ENCODE measurements at regions of chr12 and their contacts with region 1.

Region 1: GRCh38 chr12:92145731-92146496 is at the start of gene BTG1:
- DNase-seq: peak; percentile 99
- total RNA-seq, gene BTG1: 72.8 TPM

Region 2: GRCh38 chr12:91382081-91382543 is 763.8 kb before region 1 on chr12:
- intact Hi-C with region 1: loop called (anchors 2 kb)
- DNase-seq: peak; percentile 86

Region 3: DNA sequence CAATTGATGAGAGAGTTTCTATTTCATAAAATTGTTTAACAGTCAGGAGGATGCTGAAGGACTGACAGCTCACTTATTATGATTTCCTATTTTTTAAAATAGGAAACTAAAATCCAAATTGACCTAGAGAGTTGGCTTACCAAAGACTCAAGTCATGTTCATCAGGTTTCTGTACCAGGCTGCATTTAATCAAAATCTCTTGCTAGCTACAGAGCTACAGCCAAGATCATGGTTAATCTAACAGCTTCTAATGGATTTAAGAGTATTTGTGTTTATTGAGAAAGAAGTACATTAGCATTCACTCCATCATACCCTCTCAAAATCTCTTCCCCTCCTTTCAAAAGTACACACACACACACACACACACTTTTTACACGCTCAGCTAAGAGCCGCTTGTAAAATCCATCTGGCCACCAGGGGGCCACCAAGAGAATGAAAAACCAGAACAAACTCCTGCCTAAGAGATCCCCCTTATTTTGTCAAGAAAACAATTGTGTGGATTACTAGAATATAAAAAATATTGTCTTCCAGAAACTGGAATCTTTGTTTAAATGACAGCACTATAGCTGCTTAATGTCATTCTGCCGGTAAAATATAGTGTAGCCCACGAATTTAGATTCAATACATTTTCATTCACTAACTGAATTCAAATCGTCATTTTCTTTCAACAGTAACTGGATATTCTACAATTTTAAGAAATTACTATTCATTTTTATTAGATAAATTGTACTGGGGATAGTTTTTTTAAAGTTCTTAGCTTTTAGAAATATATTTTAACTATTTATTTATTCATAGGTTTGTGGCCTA is 334.2 kb before region 1 on chr12:
- intact Hi-C with region 1: loop called (anchors 2 kb)
- DNase-seq: peak; percentile 86

Region 4: DNA sequence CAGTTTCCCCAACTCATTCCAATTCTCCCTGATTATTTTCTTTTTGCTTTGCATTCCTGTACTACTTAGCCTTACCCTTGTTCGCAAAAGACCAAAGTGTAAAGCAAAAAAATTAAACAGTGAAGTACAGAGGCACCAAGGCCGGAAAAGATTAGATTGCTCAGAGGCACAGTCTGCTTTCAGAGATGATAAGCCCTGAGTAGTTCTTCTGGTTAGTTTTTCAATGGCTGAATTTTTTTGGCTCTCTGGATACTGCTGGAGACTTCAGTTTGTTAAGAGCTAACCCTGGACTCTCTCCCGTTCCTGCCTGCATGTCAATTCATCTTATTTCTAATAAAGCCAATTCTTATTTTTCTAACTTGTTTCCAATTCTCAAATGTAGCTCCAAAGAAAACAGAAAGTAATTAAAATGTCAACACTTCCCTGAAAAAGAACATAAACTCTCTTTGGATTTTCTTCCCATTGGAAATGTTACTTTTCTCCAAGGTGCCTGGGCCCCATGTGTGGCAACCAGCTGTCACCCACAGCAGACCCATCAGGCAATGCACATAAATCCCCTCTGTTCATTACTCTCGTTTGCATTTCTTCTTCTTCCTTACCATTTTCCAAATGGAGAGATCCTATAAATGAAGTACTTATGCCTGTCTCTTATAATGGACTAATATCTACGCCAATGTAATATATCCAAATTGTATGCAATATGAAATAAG is 143.1 kb before region 1 on chr12:
- intact Hi-C with region 1: loop called (anchors 5 kb)
- DNase-seq: no peak

Region 5: DNA sequence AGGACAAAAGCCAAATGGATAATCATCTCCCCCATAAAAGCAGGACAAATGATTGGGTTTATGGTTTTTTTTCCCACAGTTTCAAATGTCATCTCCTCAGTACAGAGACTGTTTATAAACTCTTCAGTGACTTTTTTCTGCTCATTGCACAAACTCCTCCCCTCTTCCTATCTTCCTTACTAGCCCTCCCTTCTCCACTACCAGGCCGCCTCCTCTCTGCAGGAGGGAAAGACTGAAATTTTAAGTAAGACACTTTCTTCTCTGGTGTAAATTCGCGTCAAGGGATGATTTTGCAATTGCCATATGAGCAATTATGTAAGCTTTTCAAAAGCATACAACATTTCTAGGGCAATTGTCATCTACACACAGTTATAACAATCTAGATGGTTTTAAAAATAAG is 37.3 kb before region 1 on chr12:
- intact Hi-C with region 1: no loop called
- DNase-seq: no peak

Region 6: GRCh38 chr12:92253301-92253700 is 107.4 kb after region 1 on chr12:
- intact Hi-C with region 1: no loop called
- DNase-seq: no peak

Region 7: DNA sequence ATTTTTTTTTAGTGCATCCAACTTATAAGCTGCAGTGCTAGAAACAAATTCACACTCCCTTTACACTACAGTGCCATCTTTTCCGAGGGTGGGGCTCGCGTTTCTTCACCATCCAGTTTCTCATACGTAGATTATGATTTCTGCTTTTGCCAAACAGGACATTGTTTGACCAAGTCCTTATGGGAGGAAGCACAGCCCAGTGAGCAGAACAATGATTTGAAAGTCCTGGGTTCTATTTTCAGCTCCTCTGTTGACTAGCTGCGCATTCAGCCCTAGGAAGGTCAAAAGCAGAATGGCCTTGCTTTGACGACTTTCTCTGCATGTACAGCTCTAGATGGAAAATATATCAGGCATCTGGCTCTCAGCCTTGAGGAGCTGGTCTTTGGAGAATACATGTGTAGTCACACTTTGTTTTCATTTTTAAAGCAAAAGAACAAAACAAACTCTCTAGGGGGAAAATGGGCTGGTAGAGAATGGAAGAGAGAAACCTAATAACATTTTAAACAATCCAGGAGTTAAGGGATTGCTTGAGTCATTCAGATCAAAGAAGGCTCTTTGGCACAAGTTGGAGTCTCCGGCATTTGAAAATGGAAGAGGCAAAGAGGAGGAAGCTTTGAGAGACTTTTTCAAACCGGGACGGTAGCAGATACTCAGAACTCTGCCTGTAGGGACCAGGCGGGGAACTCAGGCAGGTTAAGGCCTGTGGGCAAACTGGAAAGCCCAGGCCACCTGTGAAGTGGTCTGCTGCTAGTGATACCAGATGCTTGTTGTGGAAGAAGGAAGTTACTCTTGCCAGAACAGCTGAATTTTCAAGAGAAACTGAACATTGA is 299.6 kb after region 1 on chr12:
- intact Hi-C with region 1: loop called (anchors 10 kb)
- DNase-seq: no peak

Region 8: GRCh38 chr12:92570056-92570753 is 424.3 kb after region 1 on chr12:
- intact Hi-C with region 1: loop called (anchors 5 kb)
- DNase-seq: no peak

Measured in cardiac septum (tissue), 1 donor.